Common myeloid progenitor, CD34-positive (primary cell): ENCODE measurements at regions of chr3 and their contacts with region 1.

Region 1: DNA sequence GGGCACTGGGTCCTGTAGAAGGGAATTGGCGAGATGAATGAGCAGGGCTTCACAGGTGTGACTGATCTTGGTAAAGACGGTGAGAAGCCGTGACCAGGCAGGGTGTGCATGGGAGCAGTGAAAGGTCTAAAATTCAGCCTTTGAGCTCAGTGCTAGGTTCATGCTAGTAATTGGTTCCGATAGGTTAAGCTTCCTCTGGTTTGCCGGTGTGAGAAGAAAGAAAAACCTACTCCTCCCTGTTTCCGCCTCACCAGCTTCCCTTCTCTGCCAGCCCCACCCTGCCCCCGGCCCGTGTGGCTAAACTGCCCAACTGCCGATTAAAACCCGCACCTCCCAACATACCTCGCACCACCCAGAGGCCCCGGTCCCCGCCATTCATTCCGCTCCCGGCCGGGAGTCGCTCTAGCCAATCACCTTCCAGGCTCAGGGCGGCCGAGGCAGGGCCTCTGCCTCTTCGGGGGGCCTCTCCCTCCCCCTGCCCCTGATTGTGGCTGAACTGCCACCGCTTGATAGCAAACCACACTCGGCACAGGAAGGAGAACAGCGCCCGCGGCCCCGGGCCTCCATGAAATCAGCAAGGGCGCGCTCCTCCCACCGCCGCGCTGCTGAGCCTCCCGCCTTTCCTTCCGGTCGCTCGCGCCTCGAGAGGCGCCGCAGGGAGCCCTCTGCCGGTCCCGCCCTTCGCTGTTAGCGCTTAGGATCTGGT is 7.3 kb upstream of the NRROS start:
- DNase-seq: peak; percentile 99 to 100 (median 100)
- H3K4me3 ChIP-seq: peak overlapping the region in 6 of 7 experiments; percentile 3 to 83 (median 77)
- H3K27ac ChIP-seq: peak overlapping the region; percentile 98 to 99
- H3K4me1 ChIP-seq: peaks cover 19 to 88% (median 76%) of the 10 kb centered on the region in 4 experiments
- H3K27me3 ChIP-seq: no peaks in the 10 kb centered on the region

Region 2: GRCh38 chr3:196047391-196048030 is 584.7 kb before region 1 on chr3:
- CTCF ChIA-PET with region 1: no interaction called
- POLR2A ChIA-PET with region 1: no interaction called
- DNase-seq: no peak
- H3K4me3 ChIP-seq: no peak overlapping the region
- H3K27ac ChIP-seq: no peak overlapping the region
- H3K4me1 ChIP-seq: no peaks in the 10 kb centered on the region
- H3K27me3 ChIP-seq: no peaks in the 10 kb centered on the region

Region 3: GRCh38 chr3:196620161-196620604 is 12.0 kb before region 1 on chr3:
- CTCF ChIA-PET with region 1: interaction called, 306 read pairs
- POLR2A ChIA-PET with region 1: interaction called, 16 read pairs
- DNase-seq: peak; percentile 50 to 92 (median 86)
- H3K4me3 ChIP-seq: peak overlapping the region in 3 of 7 experiments; percentile 2 to 25 (median 24)
- H3K27ac ChIP-seq: peak overlapping the region; percentile 50 to 71
- H3K4me1 ChIP-seq: peaks cover 25 to 80% (median 69%) of the 10 kb centered on the region in 4 experiments
- H3K27me3 ChIP-seq: no peaks in the 10 kb centered on the region